Lower leg skin (tissue), 4 donors: ENCODE measurements at regions of chr7 and their contacts with region 1.

Region 1: GRCh38 chr7:30778214-30779025 is 7.2 kb downstream of the MINDY4 start:
- DNase-seq: peak in 1 of 2 donors; percentile 80
- H3K4me3 ChIP-seq: no peak overlapping the region
- CTCF ChIP-seq: no peak
- POLR2A ChIP-seq: no peak

Region 2: GRCh38 chr7:29479301-29480200 is 1298.9 kb before region 1 on chr7:
- intact Hi-C with region 1: loop called (anchors 5 kb)
- DNase-seq: no peak
- H3K4me3 ChIP-seq: no peak overlapping the region
- CTCF ChIP-seq: no peak
- POLR2A ChIP-seq: no peak